HepG2 (cell line): ENCODE measurements at regions of chr17 and their contacts with region 1.

Region 1: DNA sequence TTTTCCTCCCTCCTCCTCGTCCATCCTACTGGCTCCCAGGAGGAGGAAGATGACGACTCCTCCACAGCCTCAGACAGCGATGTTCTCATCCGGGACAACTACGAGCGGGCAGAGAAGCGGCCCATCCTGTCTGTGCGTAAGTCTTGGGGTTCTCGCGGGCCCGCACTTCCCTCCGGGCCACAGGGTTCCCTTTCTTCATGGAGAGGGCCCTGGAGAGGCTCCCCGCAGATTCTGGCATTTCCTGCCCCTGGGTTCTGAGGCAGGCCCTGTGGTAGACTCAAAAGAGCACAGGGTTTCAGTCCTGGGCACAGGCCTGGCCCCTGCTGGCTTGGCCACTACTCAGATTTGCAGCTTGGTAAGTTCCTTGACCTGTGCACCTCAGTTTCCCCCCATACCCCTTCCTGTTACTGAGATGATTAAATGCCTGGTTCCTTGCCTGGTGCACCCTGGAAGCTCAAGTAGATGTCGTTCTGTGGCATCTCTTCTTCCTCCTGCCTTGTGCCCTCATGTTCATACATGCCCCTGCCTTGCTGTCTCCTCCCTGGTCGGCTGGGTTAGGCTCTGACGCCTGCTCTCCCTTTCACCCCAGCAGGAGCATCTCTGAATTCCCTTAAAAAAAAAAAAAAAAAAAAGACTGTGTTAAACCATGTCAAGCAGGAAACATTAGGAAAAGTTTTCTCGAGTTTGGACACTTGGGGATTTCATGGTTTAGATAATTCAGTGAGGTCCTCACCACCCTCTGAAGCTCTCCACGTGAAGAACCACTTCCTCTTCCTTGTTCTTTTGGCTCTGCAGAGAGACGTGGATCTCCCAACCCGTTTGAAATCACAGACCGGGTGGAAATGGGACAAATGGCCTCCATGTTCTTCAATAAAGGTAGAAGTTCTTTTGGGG is 14.3 kb upstream of the NAT9 start:
- DNase-seq: no peak
- ATAC-seq: no peak
- H3K4me3 ChIP-seq: no peak overlapping the region
- H3K27ac ChIP-seq: no peak overlapping the region
- H3K4me1 ChIP-seq: no peaks in the 10 kb centered on the region
- H3K27me3 ChIP-seq: no peaks in the 10 kb centered on the region
- CTCF ChIP-seq: no peak
- EP300 ChIP-seq: no peak
- POLR2A ChIP-seq: no peak
- RAD21 ChIP-seq: no peak

Region 2: GRCh38 chr17:74859459-74860228 is 69.2 kb after region 1 on chr17 and contains the start of gene GRIN2C:
- CTCF ChIA-PET with region 1: interaction called, 30 read pairs
- POLR2A ChIA-PET with region 1: no interaction called
- in situ Hi-C with region 1: loop called (anchors 5 kb)
- intact Hi-C with region 1: loop called (anchors 1 kb)
- DNase-seq: no peak
- ATAC-seq: 0 out of 3 replicates have a peak, but pooled peaks have one; percentile 2
- H3K4me3 ChIP-seq: peak within 1 kb of the TSS; percentile 45 to 53 (median 50); a peak in 4 of 6 replicates
- H3K27ac ChIP-seq: no peak within 1 kb of the TSS
- H3K4me1 ChIP-seq: peaks cover 35% of the 10 kb centered on the region
- H3K27me3 ChIP-seq: peaks cover 24 to 58% of the 10 kb centered on the region in 2 experiments; a peak in 4 of 5 replicates
- CTCF ChIP-seq: peak; percentile 38; the same call in 1 of the 2 replicates
- EP300 ChIP-seq: no peak
- POLR2A ChIP-seq: no peak
- RAD21 ChIP-seq: peak; percentile 51; the same call in 1 of the 2 replicates
- total RNA-seq, gene GRIN2C: 0.11 TPM in 1 of 2 replicates, not detected in the other

Region 3: DNA sequence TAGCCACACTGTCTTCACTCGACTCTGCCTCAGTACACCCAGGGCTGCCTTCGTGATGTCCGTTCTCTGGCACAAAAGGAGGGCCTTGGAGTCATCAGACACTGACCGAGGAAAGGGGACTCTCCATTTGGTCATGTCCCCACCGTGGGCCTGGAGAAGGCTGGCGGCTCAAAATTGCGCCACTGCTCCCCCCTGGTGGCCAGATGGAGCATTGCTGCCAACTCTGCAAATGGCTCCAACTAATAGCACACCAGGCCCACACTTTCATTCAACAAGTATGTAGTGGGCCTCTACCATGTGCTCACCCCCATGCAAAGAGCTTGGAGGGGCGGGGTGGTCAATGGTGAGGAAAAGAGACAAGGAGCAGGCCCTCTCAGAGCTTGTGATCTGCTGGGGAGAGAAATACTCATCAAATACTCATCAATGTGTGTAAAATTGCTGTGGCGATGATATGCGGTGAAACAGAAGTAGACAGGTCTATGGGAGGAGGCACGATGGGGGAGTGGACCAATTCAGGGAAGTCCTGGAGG is 74.5 kb after region 1 on chr17:
- CTCF ChIA-PET with region 1: interaction called, 30 read pairs
- POLR2A ChIA-PET with region 1: no interaction called
- in situ Hi-C with region 1: loop called (anchors 5 kb)
- intact Hi-C with region 1: loop called (anchors 1 kb)
- DNase-seq: peak; percentile 56
- ATAC-seq: peak; percentile 56
- H3K4me3 ChIP-seq: no peak overlapping the region
- H3K27ac ChIP-seq: no peak overlapping the region
- H3K4me1 ChIP-seq: peaks cover 58% of the 10 kb centered on the region
- H3K27me3 ChIP-seq: peaks cover 2 to 13% of the 10 kb centered on the region in 2 experiments; a peak in 3 of 5 replicates
- CTCF ChIP-seq: peak; percentile 98
- EP300 ChIP-seq: no peak
- POLR2A ChIP-seq: no peak
- RAD21 ChIP-seq: peak; percentile 81